A549 (cell line): ENCODE measurements at regions of chr11 and their contacts with region 1.

Region 1: DNA sequence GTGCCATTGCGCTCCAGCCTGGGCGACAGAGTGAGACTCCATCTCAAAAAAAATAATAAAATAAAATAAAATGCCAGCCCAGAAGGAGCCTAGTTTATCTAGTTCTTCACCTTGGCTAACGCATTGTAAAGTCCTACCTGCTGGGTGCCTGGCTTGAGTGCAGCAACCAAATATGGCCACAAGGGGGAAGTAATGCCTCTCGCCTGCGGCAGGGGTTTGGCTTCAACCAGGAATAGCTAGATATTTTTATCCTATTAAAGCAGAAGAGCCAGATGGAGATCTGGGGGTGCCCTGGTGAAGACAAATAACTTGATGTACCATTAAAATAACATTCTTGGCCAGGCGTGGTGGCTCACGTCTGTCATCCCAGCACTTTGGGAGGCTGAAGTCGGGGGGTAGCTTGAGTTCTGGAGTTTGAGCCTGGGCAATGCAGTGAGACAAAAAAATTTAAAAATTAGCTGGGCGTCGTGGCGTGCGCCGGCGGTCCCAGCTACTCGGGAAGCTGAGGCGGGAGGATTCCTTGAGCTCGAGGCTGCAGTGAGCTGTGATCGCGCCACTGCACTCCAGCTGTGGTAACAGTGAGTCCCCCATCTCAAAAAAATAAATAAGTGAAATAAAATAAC is 20.6 kb upstream of the PLEKHB1 start:
- DNase-seq: peak; percentile 74 to 97
- ATAC-seq: peak; percentile 95 to 96
- H3K4me3 ChIP-seq: peak overlapping the region; percentile 32
- H3K27ac ChIP-seq: peak overlapping the region; percentile 36 to 66; a peak in 5 of 6 replicates
- H3K4me1 ChIP-seq: no peaks in the 10 kb centered on the region
- CTCF ChIP-seq: peak; percentile 83
- EP300 ChIP-seq: no peak
- POLR2A ChIP-seq: no peak
- RAD21 ChIP-seq: peak; percentile 77 to 86

Region 2: DNA sequence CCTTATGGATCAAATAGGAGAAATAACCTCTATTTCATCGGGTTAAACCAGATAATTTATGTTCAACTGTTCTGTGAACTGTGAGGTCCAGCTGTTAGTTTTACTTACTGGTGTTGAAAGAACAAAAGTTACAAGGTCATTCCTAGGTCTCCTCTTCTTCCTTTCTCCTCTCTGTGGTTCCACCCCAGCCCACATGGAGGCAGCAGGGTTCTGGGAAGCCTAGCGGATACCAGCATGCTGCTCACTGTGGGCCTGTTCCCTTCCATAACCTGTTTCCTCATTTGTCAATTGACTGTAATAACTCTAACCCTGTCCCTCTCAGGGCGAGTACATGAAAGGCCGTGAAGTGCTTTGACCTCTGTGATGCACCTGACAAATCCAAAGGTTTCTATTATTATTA is 221.8 kb before region 1 on chr11:
- CTCF ChIA-PET with region 1: interaction called, 11 read pairs
- POLR2A ChIA-PET with region 1: no interaction called
- DNase-seq: peak; percentile 59 to 63
- ATAC-seq: peak; percentile 74 to 88
- H3K4me3 ChIP-seq: no peak overlapping the region
- H3K27ac ChIP-seq: no peak overlapping the region
- H3K4me1 ChIP-seq: no peaks in the 10 kb centered on the region
- CTCF ChIP-seq: peak; percentile 45
- EP300 ChIP-seq: no peak
- POLR2A ChIP-seq: no peak
- RAD21 ChIP-seq: peak; percentile 48 to 73

Region 3: GRCh38 chr11:73473252-73473651 is 152.6 kb before region 1 on chr11:
- CTCF ChIA-PET with region 1: interaction called, 20 read pairs
- POLR2A ChIA-PET with region 1: no interaction called
- DNase-seq: no peak
- ATAC-seq: no peak
- H3K4me3 ChIP-seq: no peak overlapping the region
- H3K27ac ChIP-seq: no peak overlapping the region
- H3K4me1 ChIP-seq: no peaks in the 10 kb centered on the region
- CTCF ChIP-seq: no peak
- EP300 ChIP-seq: no peak
- POLR2A ChIP-seq: no peak
- RAD21 ChIP-seq: no peak

Region 4: GRCh38 chr11:73597956-73598718 is 27.7 kb before region 1 on chr11 and contains the start of gene FAM168A:
- CTCF ChIA-PET with region 1: interaction called, 29 read pairs
- POLR2A ChIA-PET with region 1: interaction called, 4 read pairs
- DNase-seq: peak; percentile 98
- ATAC-seq: peak; percentile 97 to 98
- H3K4me3 ChIP-seq: peak within 1 kb of the TSS; percentile 86
- H3K27ac ChIP-seq: peak within 1 kb of the TSS; percentile 90 to 99
- H3K4me1 ChIP-seq: peaks cover 23% of the 10 kb centered on the region; the same call in 2 of the 3 replicates
- CTCF ChIP-seq: no peak
- EP300 ChIP-seq: no peak
- POLR2A ChIP-seq: peak; percentile 84
- RAD21 ChIP-seq: peak in 1 of 2 experiments; percentile 19; a peak in 2 of 5 replicates
- polyA plus RNA-seq, gene FAM168A: 15.3 and 21.7 TPM in 2 replicates

Region 5: GRCh38 chr11:73647459-73648100 is 21.8 kb after region 1 on chr11:
- CTCF ChIA-PET with region 1: interaction called, 167 read pairs
- POLR2A ChIA-PET with region 1: no interaction called
- DNase-seq: peak; percentile 58 to 62
- ATAC-seq: peak; percentile 81 to 89
- H3K4me3 ChIP-seq: peak overlapping the region; percentile 18; the same call in 1 of the 3 replicates
- H3K27ac ChIP-seq: 0 out of 6 replicates have a peak overlapping the region, but pooled peaks of 1 of the 2 experiments have one; percentile 14
- H3K4me1 ChIP-seq: no peaks in the 10 kb centered on the region
- CTCF ChIP-seq: no peak
- EP300 ChIP-seq: no peak
- POLR2A ChIP-seq: no peak
- RAD21 ChIP-seq: no peak

Region 6: GRCh38 chr11:73931039-73931645 is 305.3 kb after region 1 on chr11:
- CTCF ChIA-PET with region 1: interaction called, 14 read pairs
- POLR2A ChIA-PET with region 1: no interaction called
- DNase-seq: peak; percentile 49 to 87
- ATAC-seq: peak; percentile 98 to 100
- H3K4me3 ChIP-seq: no peak overlapping the region
- H3K27ac ChIP-seq: no peak overlapping the region
- H3K4me1 ChIP-seq: no peaks in the 10 kb centered on the region
- CTCF ChIP-seq: peak; percentile 72
- EP300 ChIP-seq: no peak
- POLR2A ChIP-seq: no peak
- RAD21 ChIP-seq: peak; percentile 83 to 89